ENCODE measurements at regions of chr10 and their contacts with region 1.

Region 1: GRCh38 chr10:31133628-31134302 is 102.1 kb upstream of the ZNF438 start:
- DNase-seq: peak; percentile 53
- ATAC-seq: peak; percentile 84
- H3K4me3 Mint-ChIP-seq: peak overlapping the region; percentile 80
- H3K27ac Mint-ChIP-seq: peak overlapping the region; percentile 59
- H3K4me1 Mint-ChIP-seq: peaks cover 20% of the 10 kb centered on the region
- H3K27me3 Mint-ChIP-seq: no peaks in the 10 kb centered on the region
- CTCF ChIP-seq: no peak

Region 2: DNA sequence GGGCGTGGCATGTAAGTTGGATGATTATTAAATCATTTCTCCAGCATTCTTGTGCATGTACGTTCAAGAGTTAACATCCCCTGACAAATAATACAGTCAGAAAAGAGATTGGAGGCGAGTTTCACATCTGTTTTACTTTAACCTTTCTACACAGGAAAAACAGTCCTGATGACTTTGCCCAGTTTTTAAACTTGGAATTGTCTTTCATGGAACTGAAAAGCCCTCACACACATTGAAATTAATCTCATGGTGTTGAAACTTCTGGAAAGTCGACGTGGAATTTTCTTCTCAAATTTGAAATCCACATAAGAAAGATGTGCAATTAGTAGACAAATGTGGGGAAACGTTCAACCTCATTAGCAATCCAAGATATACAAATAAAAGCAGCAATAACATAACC is 70.9 kb before region 1 on chr10:
- CTCF ChIA-PET with region 1: no interaction called
- POLR2A ChIA-PET with region 1: interaction called, 13 read pairs
- intact Hi-C with region 1: no loop called
- DNase-seq: no peak
- ATAC-seq: no peak
- H3K4me3 Mint-ChIP-seq: no peak overlapping the region
- H3K27ac Mint-ChIP-seq: no peak overlapping the region
- H3K4me1 Mint-ChIP-seq: peaks cover 3% of the 10 kb centered on the region
- H3K27me3 Mint-ChIP-seq: peaks cover 22% of the 10 kb centered on the region
- CTCF ChIP-seq: no peak

Region 3: GRCh38 chr10:31101123-31101522 is 32.6 kb before region 1 on chr10:
- CTCF ChIA-PET with region 1: interaction called, 3 read pairs
- POLR2A ChIA-PET with region 1: no interaction called
- intact Hi-C with region 1: loop called (anchors 1 kb)
- DNase-seq: no peak
- ATAC-seq: peak; percentile 91
- H3K4me3 Mint-ChIP-seq: no peak overlapping the region
- H3K27ac Mint-ChIP-seq: peak overlapping the region; percentile 59
- H3K4me1 Mint-ChIP-seq: peaks cover 21% of the 10 kb centered on the region
- H3K27me3 Mint-ChIP-seq: peaks cover 2% of the 10 kb centered on the region
- CTCF ChIP-seq: no peak

Region 4: GRCh38 chr10:31171402-31172083 is 37.8 kb after region 1 on chr10:
- CTCF ChIA-PET with region 1: no interaction called
- POLR2A ChIA-PET with region 1: no interaction called
- intact Hi-C with region 1: no loop called
- DNase-seq: no peak
- ATAC-seq: no peak
- H3K4me3 Mint-ChIP-seq: no peak overlapping the region
- H3K27ac Mint-ChIP-seq: no peak overlapping the region
- H3K4me1 Mint-ChIP-seq: no peaks in the 10 kb centered on the region
- H3K27me3 Mint-ChIP-seq: peaks cover 2% of the 10 kb centered on the region
- CTCF ChIP-seq: no peak

Region 5: DNA sequence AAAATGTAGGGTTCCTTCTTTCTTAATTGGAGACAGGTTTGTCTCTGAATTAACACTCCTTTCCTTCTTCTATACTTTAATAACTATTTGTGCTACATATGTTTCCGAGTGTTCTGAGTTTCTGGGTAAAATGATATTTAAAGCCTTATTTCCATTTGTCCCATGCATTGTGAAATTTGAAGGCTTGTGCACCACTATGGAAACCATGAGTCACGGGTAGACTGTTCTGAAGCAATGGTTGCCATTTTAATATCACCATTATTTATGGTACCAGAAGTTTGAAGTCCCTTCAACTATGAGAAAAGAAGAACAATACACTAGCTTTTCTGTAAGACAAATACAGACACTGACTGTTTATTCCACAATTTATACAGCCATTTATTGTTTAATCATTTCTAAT is 140.5 kb after region 1 on chr10:
- CTCF ChIA-PET with region 1: no interaction called
- POLR2A ChIA-PET with region 1: no interaction called
- intact Hi-C with region 1: no loop called
- DNase-seq: no peak
- ATAC-seq: no peak
- H3K4me3 Mint-ChIP-seq: no peak overlapping the region
- H3K27ac Mint-ChIP-seq: no peak overlapping the region
- H3K4me1 Mint-ChIP-seq: no peaks in the 10 kb centered on the region
- H3K27me3 Mint-ChIP-seq: no peaks in the 10 kb centered on the region
- CTCF ChIP-seq: no peak

Region 6: GRCh38 chr10:31707093-31708039 is 573.6 kb after region 1 on chr10:
- CTCF ChIA-PET with region 1: no interaction called
- POLR2A ChIA-PET with region 1: no interaction called
- intact Hi-C with region 1: loop called (anchors 10 kb)
- DNase-seq: no peak
- ATAC-seq: peak; percentile 91
- H3K4me3 Mint-ChIP-seq: peak overlapping the region; percentile 62
- H3K27ac Mint-ChIP-seq: peak overlapping the region; percentile 72
- H3K4me1 Mint-ChIP-seq: peaks cover 39% of the 10 kb centered on the region
- H3K27me3 Mint-ChIP-seq: no peaks in the 10 kb centered on the region
- CTCF ChIP-seq: no peak